ENCODE measurements at regions of chr10 and their contacts with region 1.

Region 1: DNA sequence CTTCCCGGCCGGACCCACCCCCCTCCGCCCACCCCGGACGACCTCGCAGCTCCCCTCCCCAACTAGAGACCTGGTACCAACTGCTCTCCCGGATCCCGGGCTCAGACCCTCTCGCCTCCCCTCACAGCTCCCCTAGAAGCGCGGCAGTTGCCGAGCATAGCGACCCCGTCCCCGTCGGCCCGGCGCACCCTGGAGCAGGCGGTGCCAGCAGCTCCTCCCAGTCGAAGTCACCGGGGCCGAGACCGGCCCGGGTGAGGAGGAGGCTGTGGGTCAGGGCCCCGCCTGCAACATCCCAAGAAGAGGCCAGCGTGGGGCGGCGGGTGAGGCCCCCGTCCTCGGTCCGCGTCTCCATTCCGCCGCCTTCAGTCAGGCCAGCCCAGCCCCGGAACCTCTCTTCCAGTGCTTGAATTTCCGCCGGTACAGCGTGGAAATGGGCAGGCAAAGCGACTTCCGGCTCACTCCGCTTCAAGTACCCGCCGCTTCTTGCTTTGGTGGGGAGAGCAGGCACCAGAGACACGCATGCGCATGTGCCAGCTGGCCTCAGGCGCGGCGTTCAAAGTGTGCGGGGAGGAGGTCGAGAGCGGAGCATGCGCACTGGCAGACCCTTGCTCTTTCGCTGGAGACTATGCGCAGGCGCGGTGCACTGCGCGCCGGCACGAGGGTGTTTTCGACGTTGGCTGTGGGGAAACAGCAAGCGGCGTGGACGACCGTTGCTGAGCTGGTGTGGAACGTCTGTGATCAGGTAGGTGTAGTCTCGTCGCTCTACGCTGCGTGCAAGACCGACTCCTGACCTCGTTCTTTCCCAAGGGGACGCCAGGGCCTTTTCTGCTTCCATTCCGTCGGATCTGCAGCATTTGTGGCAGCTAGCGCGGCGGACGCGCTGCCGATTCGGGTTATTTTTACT is at the start of gene C10orf88:
- DNase-seq: peak; percentile 96 to 98
- H3K4me3 ChIP-seq: peak within 1 kb of the TSS; percentile 74 to 88
- H3K27ac ChIP-seq: peak within 1 kb of the TSS; percentile 76 to 80
- H3K4me1 ChIP-seq: peaks cover 0 to 27% (median 14%) of the 10 kb centered on the region in 4 donors
- H3K27me3 ChIP-seq: no peaks in the 10 kb centered on the region
- CTCF ChIP-seq: no peak

Region 2: DNA sequence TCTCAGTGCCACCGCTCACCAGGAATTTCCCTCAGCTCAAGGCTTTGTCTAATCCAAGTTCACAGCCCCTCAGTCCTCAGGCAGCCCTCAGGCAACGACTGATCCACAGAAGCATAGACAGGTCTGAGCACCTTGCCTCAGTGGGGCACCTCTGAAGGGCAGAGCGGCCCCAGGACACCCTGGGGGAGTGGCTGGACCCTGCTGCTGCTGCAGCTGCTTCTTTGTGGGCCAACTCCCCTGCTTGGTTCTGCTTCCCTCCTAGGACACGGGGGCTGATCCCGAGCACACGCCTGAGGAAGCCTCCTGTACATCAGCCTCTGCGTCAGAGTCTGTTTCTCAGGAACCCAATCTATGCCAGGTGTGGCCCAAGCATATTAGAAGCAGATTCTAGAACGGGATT is 124.6 kb before region 1 on chr10:
- intact Hi-C with region 1: no loop called
- DNase-seq: no peak
- H3K4me3 ChIP-seq: no peak overlapping the region
- H3K27ac ChIP-seq: no peak overlapping the region
- H3K4me1 ChIP-seq: no peaks in the 10 kb centered on the region
- H3K27me3 ChIP-seq: no peaks in the 10 kb centered on the region
- CTCF ChIP-seq: no peak

Region 3: GRCh38 chr10:123019941-123020703 is 66.0 kb after region 1 on chr10:
- intact Hi-C with region 1: loop called (anchors 10 kb)
- DNase-seq: no peak
- H3K4me3 ChIP-seq: no peak overlapping the region
- H3K27ac ChIP-seq: no peak overlapping the region
- H3K4me1 ChIP-seq: peaks cover 0 to 4% (median 0%) of the 10 kb centered on the region in 4 donors
- H3K27me3 ChIP-seq: no peaks in the 10 kb centered on the region
- CTCF ChIP-seq: no peak